Endothelial cell of umbilical vein (primary cell): ENCODE measurements at regions of chr10 and their contacts with region 1.

Region 1: GRCh38 chr10:101012525-101013364 is 13.1 kb downstream of the LZTS2 start:
- DNase-seq: peak; percentile 95
- H3K4me3 ChIP-seq: no peak overlapping the region
- H3K27ac ChIP-seq: peak overlapping the region; percentile 12
- H3K4me1 ChIP-seq: peaks cover 13% of the 10 kb centered on the region
- H3K27me3 ChIP-seq: no peaks in the 10 kb centered on the region
- CTCF ChIP-seq: peak; percentile 80 to 96
- POLR2A ChIP-seq: no peak

Region 2: GRCh38 chr10:100562008-100562711 is 450.6 kb before region 1 on chr10:
- CTCF ChIA-PET with region 1: interaction called, 6 read pairs
- POLR2A ChIA-PET with region 1: no interaction called
- dilution Hi-C with region 1: no loop called
- intact Hi-C with region 1: loop called (anchors 1 kb)
- DNase-seq: peak; percentile 51
- H3K4me3 ChIP-seq: no peak overlapping the region
- H3K27ac ChIP-seq: no peak overlapping the region
- H3K4me1 ChIP-seq: peaks cover 2% of the 10 kb centered on the region
- H3K27me3 ChIP-seq: peaks cover 37 to 38% of the 10 kb centered on the region in 2 experiments
- CTCF ChIP-seq: peak; percentile 89 to 91
- POLR2A ChIP-seq: no peak

Region 3: DNA sequence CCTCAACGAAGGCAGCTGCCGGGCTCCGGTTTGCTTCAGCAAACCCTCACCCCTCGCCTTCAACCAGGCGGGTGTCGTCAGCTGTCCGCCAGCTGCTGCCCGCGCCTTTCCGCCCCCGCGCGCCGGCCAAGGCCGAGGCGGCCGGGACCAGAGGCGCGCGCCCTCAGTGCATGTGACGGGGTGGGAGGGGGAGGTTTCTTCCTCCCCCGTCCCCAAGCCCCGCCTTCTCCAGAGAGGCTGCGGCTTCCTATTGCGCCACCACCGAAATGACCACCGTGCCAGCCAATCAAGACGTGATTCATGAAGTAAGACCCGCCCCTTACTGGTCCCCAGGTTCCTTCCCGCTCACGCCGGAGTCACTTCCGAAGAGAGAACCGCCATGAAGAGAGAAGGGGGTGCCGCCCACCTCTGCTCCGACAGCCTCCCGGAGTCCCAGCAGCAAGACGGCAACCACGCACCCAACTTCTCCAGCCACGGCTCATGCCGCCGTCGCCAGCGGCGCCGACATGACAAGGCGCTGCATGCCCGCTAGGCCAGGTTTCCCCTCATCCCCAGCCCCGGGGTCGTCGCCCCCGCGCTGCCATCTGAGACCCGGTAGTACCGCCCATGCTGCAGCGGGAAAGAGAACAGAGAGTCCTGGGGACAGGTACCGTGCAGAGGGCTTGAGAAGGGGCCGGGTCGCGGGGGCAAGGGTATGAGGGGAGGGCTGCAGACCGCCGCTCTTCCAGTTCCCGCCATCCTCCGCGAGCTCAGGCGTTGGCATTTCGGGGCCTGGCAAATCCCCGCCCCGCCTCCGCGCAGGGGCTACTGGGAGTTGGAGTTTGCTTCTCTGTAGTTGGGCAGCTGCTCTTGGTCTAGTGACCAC is 99.9 kb before region 1 on chr10 and contains the start of gene SLF2:
- CTCF ChIA-PET with region 1: no interaction called
- POLR2A ChIA-PET with region 1: no interaction called
- dilution Hi-C with region 1: no loop called
- intact Hi-C with region 1: loop called (anchors 10 kb)
- DNase-seq: peak; percentile 99
- H3K4me3 ChIP-seq: peak within 1 kb of the TSS; percentile 52 to 99 (median 88)
- H3K27ac ChIP-seq: peak within 1 kb of the TSS; percentile 76
- H3K4me1 ChIP-seq: peaks cover 35% of the 10 kb centered on the region
- H3K27me3 ChIP-seq: no peaks in the 10 kb centered on the region
- CTCF ChIP-seq: no peak
- POLR2A ChIP-seq: peak; percentile 53
- total RNA-seq, gene SLF2: 28.0 and 35.5 TPM in 2 replicates

Region 4: DNA sequence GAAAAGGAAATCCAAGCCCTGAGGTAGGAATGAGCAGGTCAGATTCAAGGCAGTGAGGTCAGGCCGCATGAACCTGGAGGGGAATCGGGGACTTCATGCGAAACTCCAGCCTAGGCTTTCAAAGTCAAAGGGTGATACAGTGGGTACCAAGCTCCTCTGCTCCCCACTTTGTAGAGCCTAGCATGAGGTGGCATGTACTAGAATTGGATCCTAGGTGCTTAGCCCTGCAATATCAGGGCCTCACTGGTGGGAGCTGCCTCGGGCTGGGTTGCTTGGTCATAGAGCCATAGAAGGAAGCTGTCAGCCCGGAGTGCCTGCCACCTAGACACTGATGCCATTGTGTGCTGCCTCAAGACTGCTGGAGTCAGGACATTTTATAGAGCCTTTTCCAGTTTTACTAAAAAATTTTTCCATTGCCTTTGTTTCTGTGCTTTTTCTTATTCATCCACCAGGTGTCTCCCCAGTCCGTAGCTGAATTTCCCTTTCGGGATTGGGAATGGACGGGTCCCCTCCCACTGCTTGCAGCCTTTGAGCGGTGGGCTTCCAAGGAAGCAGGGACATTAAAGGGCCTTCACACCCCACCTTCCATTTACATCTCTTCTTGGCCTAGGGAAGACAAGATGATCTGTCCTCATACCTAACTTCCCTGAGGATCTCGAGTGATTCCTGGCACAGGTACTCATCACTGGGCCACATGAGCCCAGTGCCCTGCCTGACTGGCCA is 18.6 kb before region 1 on chr10:
- CTCF ChIA-PET with region 1: interaction called, 254 read pairs
- POLR2A ChIA-PET with region 1: interaction called, 3 read pairs
- dilution Hi-C with region 1: no loop called
- intact Hi-C with region 1: loop called (anchors 1 kb)
- DNase-seq: peak; percentile 51
- H3K4me3 ChIP-seq: no peak overlapping the region
- H3K27ac ChIP-seq: no peak overlapping the region
- H3K4me1 ChIP-seq: peaks cover 18% of the 10 kb centered on the region
- H3K27me3 ChIP-seq: no peaks in the 10 kb centered on the region
- CTCF ChIP-seq: peak; percentile 60 to 63
- POLR2A ChIP-seq: no peak

Region 5: GRCh38 chr10:101031128-101031795 is 18.5 kb after region 1 on chr10 and contains the starts of genes PDZD7 and SFXN3:
- CTCF ChIA-PET with region 1: interaction called, 74 read pairs
- POLR2A ChIA-PET with region 1: no interaction called
- dilution Hi-C with region 1: no loop called
- intact Hi-C with region 1: no loop called
- DNase-seq: peak; percentile 88
- H3K4me3 ChIP-seq: peak within 1 kb of the TSS; percentile 48 to 77 (median 71)
- H3K27ac ChIP-seq: peak within 1 kb of the TSS; percentile 91
- H3K4me1 ChIP-seq: peaks cover 16% of the 10 kb centered on the region
- H3K27me3 ChIP-seq: peaks cover 0 to 9% of the 10 kb centered on the region in 2 experiments
- CTCF ChIP-seq: no peak
- POLR2A ChIP-seq: no peak
- total RNA-seq, gene PDZD7: 0.55 and 1.6 TPM in 2 replicates
- total RNA-seq, gene SFXN3: 79.6 and 83.1 TPM in 2 replicates